ENCODE measurements at regions of chr10 and their contacts with region 1.

Region 1: DNA sequence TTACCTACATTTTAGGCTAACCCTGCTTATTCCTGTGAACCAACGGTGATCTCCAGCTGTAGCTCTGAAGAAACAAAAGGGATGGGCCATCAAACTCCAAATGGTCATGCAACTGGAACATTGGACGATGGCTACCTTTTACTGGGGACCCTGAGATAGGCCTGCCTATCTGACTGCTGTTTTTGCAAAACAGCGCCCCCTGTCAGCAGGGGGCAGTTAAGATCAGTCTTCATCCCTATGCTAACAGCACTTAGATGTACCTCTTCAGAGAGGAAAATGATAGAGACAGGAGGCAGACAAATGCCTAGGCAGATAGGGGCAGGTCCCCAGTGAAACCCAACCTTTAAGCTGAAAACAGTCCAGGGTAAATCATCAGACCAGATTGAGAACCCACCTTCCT is 1085.4 kb upstream of the SORCS1 start:
- DNase-seq: no peak
- H3K4me3 ChIP-seq: no peak overlapping the region
- H3K27ac ChIP-seq: no peak overlapping the region
- H3K4me1 ChIP-seq: peaks cover 4% of the 10 kb centered on the region
- H3K27me3 ChIP-seq: no peaks in the 10 kb centered on the region
- CTCF ChIP-seq: no peak

Region 2: GRCh38 chr10:108230478-108231170 is 19.3 kb before region 1 on chr10:
- CTCF ChIA-PET with region 1: no interaction called
- dilution Hi-C with region 1: no loop called
- in situ Hi-C with region 1: no loop called
- intact Hi-C with region 1: no loop called
- DNase-seq: no peak
- H3K4me3 ChIP-seq: no peak overlapping the region
- H3K27ac ChIP-seq: no peak overlapping the region
- H3K4me1 ChIP-seq: no peaks in the 10 kb centered on the region
- H3K27me3 ChIP-seq: peaks cover 5% of the 10 kb centered on the region
- CTCF ChIP-seq: no peak

Region 3: GRCh38 chr10:108358912-108359311 is 109.0 kb after region 1 on chr10:
- CTCF ChIA-PET with region 1: no interaction called
- dilution Hi-C with region 1: no loop called
- in situ Hi-C with region 1: no loop called
- intact Hi-C with region 1: loop called (anchors 10 kb)
- DNase-seq: peak; percentile 96
- H3K4me3 ChIP-seq: no peak overlapping the region
- H3K27ac ChIP-seq: peak overlapping the region; percentile 45
- H3K4me1 ChIP-seq: peaks cover 25% of the 10 kb centered on the region
- H3K27me3 ChIP-seq: no peaks in the 10 kb centered on the region
- CTCF ChIP-seq: peak in 1 of 2 donors; percentile 18